ENCODE measurements at regions of chr15 and their contacts with region 1.

Region 1: DNA sequence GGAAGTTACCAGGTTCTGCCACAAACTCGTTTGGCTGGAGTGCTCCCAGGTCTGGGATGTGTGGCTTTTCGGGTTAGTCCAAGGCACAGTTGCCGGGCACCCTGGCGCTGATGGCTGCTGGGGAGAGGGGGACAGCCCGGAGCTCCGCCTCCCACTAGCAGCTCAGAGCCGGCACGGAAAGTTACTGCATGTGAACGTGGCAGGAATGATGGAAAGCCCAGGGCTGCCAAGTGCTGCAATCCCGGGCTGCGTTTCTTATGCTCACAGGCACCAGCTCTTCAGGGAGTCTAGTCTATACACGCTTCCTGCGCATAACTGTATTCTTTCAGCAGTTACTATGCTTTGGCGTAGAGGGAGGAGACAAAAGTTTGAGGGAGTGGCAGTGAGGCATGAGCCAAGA is 141.8 kb upstream of the ICE2 start:
- DNase-seq: no peak
- H3K4me3 ChIP-seq: no peak overlapping the region
- H3K27ac ChIP-seq: no peak overlapping the region
- H3K4me1 ChIP-seq: peaks cover 2% of the 10 kb centered on the region; the same call in 1 of the 2 replicates
- H3K27me3 ChIP-seq: no peaks in the 10 kb centered on the region
- CTCF ChIP-seq: no peak

Region 2: DNA sequence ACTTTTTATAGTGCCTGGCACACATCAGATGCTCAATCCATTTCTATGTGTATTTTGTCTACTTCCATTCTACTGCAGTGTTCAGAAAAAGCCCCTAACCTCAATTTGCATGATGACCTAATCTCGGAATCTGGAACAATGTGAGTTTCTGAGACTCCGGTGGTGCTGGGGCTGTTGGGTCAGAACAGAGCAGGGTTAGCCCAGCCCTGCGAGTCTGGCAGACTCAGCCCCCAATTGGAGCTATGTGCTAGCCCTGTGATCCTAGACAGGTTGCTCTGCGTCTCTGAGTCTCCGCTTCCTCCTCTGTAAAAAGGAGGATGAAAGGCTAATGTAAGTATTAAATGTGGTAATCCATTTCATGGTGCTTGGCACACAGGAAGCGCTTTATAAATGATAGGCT is 46.8 kb before region 1 on chr15:
- CTCF ChIA-PET with region 1: no interaction called
- POLR2A ChIA-PET with region 1: no interaction called
- intact Hi-C with region 1: no loop called
- DNase-seq: no peak
- H3K4me3 ChIP-seq: no peak overlapping the region
- H3K27ac ChIP-seq: no peak overlapping the region
- H3K4me1 ChIP-seq: peaks cover 11% of the 10 kb centered on the region; the same call in 1 of the 2 replicates
- H3K27me3 ChIP-seq: no peaks in the 10 kb centered on the region
- CTCF ChIP-seq: no peak

Region 3: GRCh38 chr15:61227269-61227949 is 606.7 kb after region 1 on chr15:
- CTCF ChIA-PET with region 1: no interaction called
- POLR2A ChIA-PET with region 1: interaction called, 13 read pairs
- intact Hi-C with region 1: no loop called
- DNase-seq: peak; percentile 4 to 60
- H3K4me3 ChIP-seq: peak overlapping the region; percentile 78
- H3K27ac ChIP-seq: no peak overlapping the region
- H3K4me1 ChIP-seq: no peaks in the 10 kb centered on the region
- H3K27me3 ChIP-seq: 0 out of 2 replicates have a peak, but pooled peaks cover 12% of the 10 kb centered on the region
- CTCF ChIP-seq: no peak

Measured in PC-9 (cell line).